CD8-positive, alpha-beta T cell (primary cell): ENCODE measurements at regions of chr2 and their contacts with region 1.

Region 1: DNA sequence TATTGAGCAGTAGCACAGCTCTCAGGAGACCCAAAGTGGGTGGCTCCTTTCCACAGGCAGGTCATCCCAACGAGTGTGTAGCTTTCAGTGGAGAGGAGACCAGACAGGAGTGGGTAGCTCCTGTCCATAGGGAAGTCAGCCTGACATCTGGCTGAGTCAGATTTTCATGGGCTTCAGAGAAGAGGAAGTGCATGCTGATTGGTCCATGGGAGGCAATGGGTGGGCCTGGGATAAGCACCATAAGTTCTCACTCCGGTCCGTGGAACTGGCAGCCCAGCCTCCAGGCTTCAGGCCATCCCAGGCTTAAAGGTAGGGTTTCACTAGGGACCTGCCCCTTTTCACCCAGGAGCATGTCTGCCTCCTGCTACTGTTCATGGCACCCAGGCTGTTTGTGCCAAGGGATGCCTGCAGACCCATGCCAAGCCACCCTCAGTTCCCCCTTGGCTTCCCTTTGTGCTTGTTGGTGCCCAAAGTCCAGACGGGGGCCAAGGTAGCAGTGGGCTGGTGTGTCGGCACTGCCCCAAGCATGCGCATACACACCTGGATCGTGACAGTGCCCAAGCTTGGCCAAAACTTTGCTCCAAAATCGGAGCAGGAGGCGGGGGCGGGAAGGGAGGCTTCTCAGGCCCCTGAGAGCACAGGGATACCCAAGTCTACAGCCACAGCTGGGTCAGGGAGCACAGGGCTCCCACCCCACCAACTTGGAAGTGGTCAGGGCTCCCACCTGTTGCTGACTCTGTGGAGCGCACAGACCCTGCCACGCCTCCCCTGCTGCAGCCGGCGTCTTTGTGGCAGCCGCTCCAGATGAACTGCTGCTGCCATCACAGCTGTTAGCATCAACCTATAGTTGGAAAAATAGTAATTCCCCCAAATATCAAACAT is 26.4 kb downstream of the MARCHF7 start:
- DNase-seq: no peak
- ATAC-seq: no peak
- H3K4me3 ChIP-seq: no peak overlapping the region
- H3K4me3 Mint-ChIP-seq: no peak overlapping the region
- H3K27ac ChIP-seq: no peak overlapping the region
- H3K27ac Mint-ChIP-seq: peak overlapping the region; percentile 22
- H3K4me1 ChIP-seq: no peaks in the 10 kb centered on the region
- H3K4me1 Mint-ChIP-seq: peaks cover 47% of the 10 kb centered on the region
- H3K27me3 ChIP-seq: no peaks in the 10 kb centered on the region
- H3K27me3 Mint-ChIP-seq: no peaks in the 10 kb centered on the region
- CTCF ChIP-seq: no peak

Region 2: GRCh38 chr2:159728629-159729028 is 10.1 kb before region 1 on chr2:
- CTCF ChIA-PET with region 1: no interaction called
- POLR2A ChIA-PET with region 1: no interaction called
- intact Hi-C with region 1: loop called in 1 of 2 experiments (anchors 1 kb)
- DNase-seq: no peak
- ATAC-seq: no peak
- H3K4me3 ChIP-seq: no peak overlapping the region
- H3K4me3 Mint-ChIP-seq: no peak overlapping the region
- H3K27ac ChIP-seq: no peak overlapping the region
- H3K27ac Mint-ChIP-seq: no peak overlapping the region
- H3K4me1 ChIP-seq: peaks cover 23% of the 10 kb centered on the region
- H3K4me1 Mint-ChIP-seq: peaks cover 58% of the 10 kb centered on the region
- H3K27me3 ChIP-seq: no peaks in the 10 kb centered on the region
- H3K27me3 Mint-ChIP-seq: no peaks in the 10 kb centered on the region
- CTCF ChIP-seq: no peak